ENCODE measurements at regions of chr16 and their contacts with region 1.

Region 1: DNA sequence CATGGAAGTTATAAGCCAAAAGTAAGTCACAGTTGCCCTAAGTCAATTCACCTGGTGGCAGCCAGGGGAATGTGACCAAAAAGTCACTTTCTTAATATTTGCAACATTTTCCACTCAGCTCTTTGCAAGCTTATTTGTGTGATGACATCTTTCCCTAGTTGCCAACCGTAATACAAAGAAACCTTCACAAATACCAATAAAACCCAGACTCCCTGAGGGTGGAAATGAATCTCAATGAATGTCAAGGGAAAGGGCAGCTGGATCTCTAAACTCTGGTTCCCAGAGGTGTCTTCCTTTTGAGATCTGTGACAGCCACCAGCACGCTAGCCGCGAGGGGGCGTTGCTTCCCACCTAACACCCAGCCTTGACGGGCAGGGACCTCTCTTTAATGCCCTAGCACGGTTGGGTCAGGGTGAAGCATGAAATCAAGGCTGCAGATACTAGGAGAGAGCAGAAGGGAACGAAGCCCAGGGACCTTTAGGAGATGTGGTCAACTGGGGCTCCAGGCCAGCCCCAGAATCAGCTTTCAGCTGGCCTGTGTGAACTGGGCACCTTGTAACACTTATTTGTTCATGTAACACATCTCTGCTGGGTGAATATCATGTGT is 82.2 kb downstream of the CMC2 start:
- DNase-seq: peak; percentile 75
- H3K4me3 Mint-ChIP-seq: no peak overlapping the region
- H3K27ac Mint-ChIP-seq: no peak overlapping the region
- H3K4me1 Mint-ChIP-seq: no peaks in the 10 kb centered on the region
- H3K27me3 Mint-ChIP-seq: peaks cover 9% of the 10 kb centered on the region

Region 2: DNA sequence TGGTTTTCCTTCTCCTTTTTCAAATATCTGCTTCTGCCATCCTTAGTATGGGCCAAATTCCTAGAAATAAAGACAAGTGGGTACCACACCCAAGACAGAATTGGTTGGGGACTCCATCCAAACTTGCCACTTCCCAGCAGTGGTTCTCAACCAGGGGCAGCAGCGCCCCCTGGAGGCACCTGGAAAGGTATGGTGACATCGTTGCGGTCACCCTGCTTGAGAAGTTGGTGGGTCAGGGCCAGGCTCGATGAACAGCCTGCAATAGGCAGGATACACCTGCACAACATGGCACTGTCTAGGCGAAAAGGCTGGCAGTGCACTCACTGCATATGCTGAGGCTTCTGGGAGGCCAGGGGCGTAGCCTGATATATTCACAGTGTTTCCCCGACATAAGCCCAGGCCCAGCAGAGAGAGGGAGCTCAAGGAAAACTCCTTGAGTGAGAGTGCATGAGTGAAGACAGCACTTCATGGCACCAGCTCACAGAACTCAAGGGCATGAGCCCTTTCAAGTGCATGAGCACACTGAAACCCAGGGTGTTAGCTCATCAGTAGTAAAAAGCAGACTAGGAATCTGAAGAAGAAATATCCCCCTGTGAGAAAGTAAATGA is 24.5 kb after region 1 on chr16:
- CTCF ChIA-PET with region 1: interaction called, 12 read pairs
- POLR2A ChIA-PET with region 1: no interaction called
- intact Hi-C with region 1: loop called (anchors 1 kb)
- DNase-seq: peak; percentile 69
- H3K4me3 Mint-ChIP-seq: no peak overlapping the region
- H3K27ac Mint-ChIP-seq: no peak overlapping the region
- H3K4me1 Mint-ChIP-seq: peaks cover 22% of the 10 kb centered on the region
- H3K27me3 Mint-ChIP-seq: peaks cover 13% of the 10 kb centered on the region

Region 3: DNA sequence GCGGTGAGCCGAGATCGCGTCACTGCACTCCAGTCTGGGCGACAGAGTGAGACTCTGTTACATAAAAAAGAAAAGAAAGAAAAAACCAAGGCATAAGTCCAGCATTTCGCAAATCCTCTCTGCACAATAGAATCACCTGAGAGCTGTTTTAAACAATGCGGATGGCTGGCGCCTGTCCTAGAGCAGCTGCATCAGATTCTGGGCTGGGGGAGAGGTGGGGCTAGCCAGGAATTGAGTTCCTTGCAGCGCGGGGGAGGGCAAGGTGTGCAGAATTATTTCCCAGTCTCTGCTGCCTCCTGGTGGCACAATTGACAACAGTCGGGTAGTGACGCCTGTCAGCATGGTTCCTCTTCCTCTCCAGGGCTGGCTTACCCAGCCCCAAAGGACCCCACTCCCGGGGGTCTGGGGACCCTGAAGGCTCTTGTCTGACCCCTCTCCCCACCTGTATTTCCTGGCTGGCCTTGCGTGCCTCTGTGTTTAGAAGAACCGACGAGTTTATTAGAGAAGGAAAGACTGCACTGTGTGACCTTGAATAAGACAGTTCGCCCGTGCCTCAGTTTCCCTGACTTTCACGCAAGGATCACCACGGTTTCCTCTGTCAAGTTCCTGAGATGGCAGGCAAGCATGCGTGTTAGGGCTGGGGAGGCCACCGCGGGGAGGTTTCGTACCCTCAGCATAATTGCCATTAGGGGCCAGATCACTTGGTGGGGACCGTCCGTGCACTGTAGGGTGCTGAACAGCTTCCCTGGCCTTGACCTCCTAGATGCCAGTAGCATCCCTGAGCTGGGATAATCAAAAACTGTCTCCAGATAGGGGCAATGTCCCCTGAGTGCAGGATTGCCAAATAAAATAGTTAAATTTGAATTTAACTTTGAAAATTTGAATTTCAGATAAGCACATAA is 813.7 kb after region 1 on chr16:
- CTCF ChIA-PET with region 1: no interaction called
- POLR2A ChIA-PET with region 1: no interaction called
- intact Hi-C with region 1: loop called (anchors 5 kb)
- DNase-seq: peak; percentile 93
- H3K4me3 Mint-ChIP-seq: peak overlapping the region; percentile 53
- H3K27ac Mint-ChIP-seq: peak overlapping the region; percentile 7
- H3K4me1 Mint-ChIP-seq: peaks cover 8% of the 10 kb centered on the region
- H3K27me3 Mint-ChIP-seq: no peaks in the 10 kb centered on the region

Region 4: GRCh38 chr16:82835487-82836155 is 1911.1 kb after region 1 on chr16:
- CTCF ChIA-PET with region 1: no interaction called
- POLR2A ChIA-PET with region 1: no interaction called
- intact Hi-C with region 1: no loop called
- DNase-seq: no peak
- H3K4me3 Mint-ChIP-seq: no peak overlapping the region
- H3K27ac Mint-ChIP-seq: no peak overlapping the region
- H3K4me1 Mint-ChIP-seq: no peaks in the 10 kb centered on the region
- H3K27me3 Mint-ChIP-seq: peaks cover under 1% of the 10 kb centered on the region

Measured in activated CD4-positive, alpha-beta memory T cell treated with anti-CD3 and anti-CD28 coated beads for 36 hours (primary cell).